ENCODE measurements at regions of chr3 and their contacts with region 1.

Region 1: DNA sequence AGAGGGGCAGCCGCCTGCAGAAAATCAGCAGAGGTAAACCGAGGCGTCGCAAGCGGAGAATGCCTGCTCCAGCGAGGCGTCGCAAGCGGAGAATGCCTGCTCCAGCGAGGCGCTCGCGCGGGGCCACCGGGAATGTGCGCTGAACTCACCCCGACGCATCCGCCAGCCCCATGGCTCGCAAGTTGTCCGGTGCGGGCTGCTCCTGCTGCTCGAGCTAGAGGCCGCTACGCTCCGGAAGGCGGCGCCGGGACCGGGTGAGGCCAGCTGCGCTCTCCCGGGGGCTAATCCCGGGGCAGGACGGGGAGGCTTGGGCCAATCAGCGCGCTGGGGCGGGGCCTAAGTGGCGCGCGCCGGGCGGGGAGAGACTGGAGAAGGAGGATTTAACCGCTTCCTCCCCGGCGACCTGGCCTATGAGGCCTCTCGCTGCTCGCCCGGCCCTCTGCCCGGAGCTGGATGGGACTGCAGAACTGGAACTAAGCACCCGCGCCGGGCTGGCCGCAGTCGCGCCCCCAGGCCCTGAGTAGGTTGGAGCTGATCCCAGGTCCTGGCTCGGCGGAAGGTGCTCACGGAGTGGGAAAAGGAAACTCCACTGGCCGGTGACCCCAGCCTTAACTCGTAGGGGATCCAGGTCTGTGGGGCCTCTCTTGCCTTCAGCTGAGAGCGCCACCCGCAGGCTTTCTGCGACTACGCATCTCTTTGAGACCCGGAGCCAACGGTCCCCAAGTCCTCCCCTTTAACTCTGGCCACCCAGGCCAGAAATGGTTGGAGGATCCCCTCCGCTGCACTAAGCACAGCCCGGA is at the start of gene SLC26A6:
- DNase-seq: peak; percentile 77
- ATAC-seq: peak; percentile 96
- H3K4me3 ChIP-seq: peak within 1 kb of the TSS; percentile 77
- H3K27ac ChIP-seq: peak within 1 kb of the TSS; percentile 57
- H3K4me1 ChIP-seq: peaks cover 11% of the 10 kb centered on the region; the same call in 1 of the 2 replicates
- H3K27me3 ChIP-seq: no peaks in the 10 kb centered on the region
- CTCF ChIP-seq: peak; percentile 52 to 81 (median 78)
- EP300 ChIP-seq: no peak
- POLR2A ChIP-seq: peak; percentile 77
- RAD21 ChIP-seq: peak; percentile 43
- polyA plus RNA-seq, gene SLC26A6: 2.1 to 2.9 TPM

Region 2: DNA sequence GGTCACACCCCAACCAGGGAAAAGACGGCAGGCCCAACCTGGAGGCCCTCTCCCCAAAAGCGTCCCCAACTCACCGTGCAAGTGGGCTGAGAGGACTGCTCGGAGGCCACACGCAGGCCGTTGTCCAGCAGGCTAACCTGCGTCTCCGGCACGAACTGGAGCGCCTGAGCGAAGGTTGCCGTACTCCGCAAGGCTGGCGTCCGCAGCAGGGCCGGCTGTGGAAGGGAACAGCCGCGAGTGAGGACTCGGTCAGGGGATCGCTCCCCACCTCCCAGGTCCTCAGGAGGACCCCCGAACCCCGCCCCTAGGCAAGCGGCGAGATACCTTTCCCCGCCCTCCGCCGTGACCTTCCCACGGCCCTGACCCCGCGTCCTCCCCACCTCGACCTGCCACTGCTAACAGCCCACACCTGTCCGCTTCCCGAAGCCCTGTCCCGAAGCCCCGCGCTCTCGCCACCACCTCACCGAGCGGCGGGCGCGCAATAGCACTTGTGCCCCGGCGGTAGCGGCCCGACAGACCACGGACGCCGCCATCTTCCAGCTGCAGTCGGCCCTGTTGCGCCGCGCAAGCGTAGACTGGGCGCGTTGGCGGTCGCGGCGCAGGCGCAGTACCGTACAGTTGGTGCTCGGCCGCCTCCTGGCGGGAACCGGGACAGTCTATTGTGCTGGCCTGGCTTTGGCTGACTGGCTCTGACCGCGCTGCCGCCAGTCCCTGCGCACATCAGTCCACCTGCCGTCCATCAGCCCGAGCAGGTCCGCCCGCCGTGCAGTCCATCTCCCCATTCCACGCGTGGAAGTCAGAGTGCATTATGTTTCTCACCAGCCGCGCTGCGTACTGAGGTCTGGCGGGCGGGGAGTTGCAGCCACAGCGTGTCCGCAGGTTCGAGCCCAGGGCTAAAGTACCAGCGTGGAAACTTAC is 26.1 kb before region 1 on chr3 and contains the start of gene UQCRC1:
- CTCF ChIA-PET with region 1: interaction called, 7 read pairs
- POLR2A ChIA-PET with region 1: no interaction called
- RAD21 ChIA-PET with region 1: interaction called, 6 read pairs
- SMC1A ChIA-PET with region 1: interaction called, 4 read pairs
- in situ Hi-C with region 1: no loop called
- intact Hi-C with region 1: loop called (anchors 2 kb)
- DNase-seq: peak; percentile 78
- ATAC-seq: peak; percentile 100
- H3K4me3 ChIP-seq: peak within 1 kb of the TSS; percentile 78
- H3K27ac ChIP-seq: peak within 1 kb of the TSS; percentile 85
- H3K4me1 ChIP-seq: peaks cover 9% of the 10 kb centered on the region
- H3K27me3 ChIP-seq: no peaks in the 10 kb centered on the region
- CTCF ChIP-seq: peak; percentile 60 to 89 (median 80)
- EP300 ChIP-seq: no peak; a peak in 1 of 4 replicates
- POLR2A ChIP-seq: peak; percentile 100
- RAD21 ChIP-seq: no peak
- polyA plus RNA-seq, gene UQCRC1: 116 to 188 TPM

Region 3: GRCh38 chr3:48623851-48624547 is 11.4 kb before region 1 on chr3:
- CTCF ChIA-PET with region 1: interaction called, 16 read pairs
- POLR2A ChIA-PET with region 1: no interaction called
- RAD21 ChIA-PET with region 1: interaction called, 3 read pairs
- SMC1A ChIA-PET with region 1: interaction called, 4 read pairs
- in situ Hi-C with region 1: no loop called
- intact Hi-C with region 1: no loop called
- DNase-seq: no peak
- ATAC-seq: no peak
- H3K4me3 ChIP-seq: no peak overlapping the region
- H3K27ac ChIP-seq: no peak overlapping the region
- H3K4me1 ChIP-seq: no peaks in the 10 kb centered on the region
- H3K27me3 ChIP-seq: no peaks in the 10 kb centered on the region
- CTCF ChIP-seq: no peak
- EP300 ChIP-seq: no peak
- POLR2A ChIP-seq: no peak
- RAD21 ChIP-seq: no peak

Region 4: DNA sequence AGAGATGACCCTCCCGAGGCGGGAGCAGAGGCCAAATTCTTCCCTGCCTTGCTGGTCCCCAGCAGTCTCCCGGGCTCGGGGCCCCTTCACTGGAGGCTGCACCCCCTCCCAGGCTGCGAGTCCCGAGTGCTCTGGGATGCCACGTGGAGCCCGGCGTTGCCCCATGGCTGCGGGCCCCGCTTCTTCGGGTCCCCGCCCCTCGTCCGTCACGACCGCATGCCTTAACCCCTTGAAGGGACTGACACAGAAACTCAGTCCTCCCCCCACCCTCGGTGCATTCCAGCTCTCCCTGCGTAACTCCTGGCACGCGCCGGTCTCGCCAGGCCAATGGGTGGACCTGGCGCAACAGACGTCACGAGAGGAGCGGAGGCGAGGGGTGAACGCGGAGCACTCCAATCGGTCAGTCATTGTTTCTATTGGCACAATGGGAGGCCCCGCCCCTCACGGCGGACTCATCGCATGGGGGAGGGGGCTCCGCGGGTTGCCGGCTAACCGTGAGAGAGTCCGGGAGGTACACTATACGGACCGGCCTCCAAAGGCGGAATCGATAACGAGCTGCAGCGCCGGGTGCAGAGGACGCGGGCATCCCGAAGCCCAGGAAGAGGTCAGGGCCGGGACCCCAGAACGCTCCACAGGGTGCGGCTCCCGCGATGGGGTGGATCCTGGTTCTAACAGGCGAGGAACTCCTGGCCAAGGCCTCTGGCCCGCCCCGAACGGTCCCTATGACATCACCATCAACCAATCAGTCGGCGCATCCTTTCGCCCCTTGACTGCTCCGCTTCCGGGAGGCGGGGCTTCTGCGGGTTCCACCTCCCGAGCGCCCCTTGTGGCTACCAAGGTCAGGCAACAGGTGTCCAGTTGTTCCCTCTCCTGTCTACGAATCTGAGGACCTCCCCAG is 28.2 kb after region 1 on chr3:
- CTCF ChIA-PET with region 1: interaction called, 8 read pairs
- POLR2A ChIA-PET with region 1: interaction called, 3 read pairs
- RAD21 ChIA-PET with region 1: interaction called, 3 read pairs
- SMC1A ChIA-PET with region 1: no interaction called
- in situ Hi-C with region 1: no loop called
- intact Hi-C with region 1: loop called (anchors 2 kb)
- DNase-seq: peak; percentile 89
- ATAC-seq: peak; percentile 94
- H3K4me3 ChIP-seq: peak overlapping the region; percentile 74
- H3K27ac ChIP-seq: peak overlapping the region; percentile 46; the same call in 1 of the 2 replicates
- H3K4me1 ChIP-seq: peaks cover 9% of the 10 kb centered on the region
- H3K27me3 ChIP-seq: peaks cover 0 to 3% of the 10 kb centered on the region in 2 experiments; a peak in 1 of 4 replicates
- CTCF ChIP-seq: peak; percentile 88 to 91 (median 90)
- EP300 ChIP-seq: no peak
- POLR2A ChIP-seq: peak; percentile 72
- RAD21 ChIP-seq: no peak

Measured in GM12878 (cell line).